ENCODE measurements at regions of chr4 and their contacts with region 1.

Region 1: DNA sequence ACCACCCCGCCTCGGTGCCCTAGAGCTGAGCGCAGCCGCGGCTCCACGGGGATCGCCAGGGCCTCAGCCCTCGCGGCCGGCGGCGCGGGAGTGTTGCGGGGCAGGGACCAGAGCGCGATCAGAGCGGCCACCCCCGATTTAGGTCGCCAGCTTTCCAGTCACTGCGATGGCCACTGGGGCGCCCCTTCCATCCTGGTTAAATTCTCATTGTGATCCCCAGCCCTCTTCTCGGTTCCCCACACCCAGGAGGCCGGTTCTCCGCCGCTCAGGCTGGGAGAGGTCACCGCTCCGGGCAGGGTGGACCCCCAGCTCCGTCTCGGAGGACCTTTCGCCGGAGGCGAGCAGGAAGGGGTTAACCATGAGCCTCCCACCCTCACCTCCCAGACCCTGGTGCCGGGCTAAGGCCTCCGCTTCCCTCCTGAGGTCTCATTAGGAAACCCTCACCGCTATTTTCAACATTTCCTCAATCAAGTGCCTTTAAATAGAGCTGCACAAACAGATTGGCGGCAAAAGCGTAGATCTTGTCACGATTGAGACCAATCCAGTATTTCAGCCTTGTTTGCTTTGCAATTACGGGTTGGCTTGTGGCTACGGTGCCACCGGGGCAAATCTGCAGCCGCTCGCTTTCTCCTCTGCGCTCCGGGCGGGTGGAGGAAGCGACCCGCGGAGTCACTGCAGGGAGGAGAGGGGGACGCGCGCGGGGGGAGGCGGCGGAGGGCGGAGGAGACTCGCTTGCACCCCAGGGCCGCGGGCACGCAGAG is 8.3 kb upstream of the HAND2 start:
- DNase-seq: peak; percentile 60 to 84 (median 70)
- ATAC-seq: peak; percentile 68 to 80 (median 76)
- H3K4me3 ChIP-seq: peak overlapping the region; percentile 25 to 85 (median 54)
- H3K27ac ChIP-seq: peak overlapping the region; percentile 72 to 99 (median 92)
- H3K4me1 ChIP-seq: peaks cover 0 to 40% (median 15%) of the 10 kb centered on the region in 12 donors
- H3K27me3 ChIP-seq: peaks cover 0 to 84% (median 3%) of the 10 kb centered on the region in 9 donors
- CTCF ChIP-seq: no peak
- POLR2A ChIP-seq: no peak

Region 2: DNA sequence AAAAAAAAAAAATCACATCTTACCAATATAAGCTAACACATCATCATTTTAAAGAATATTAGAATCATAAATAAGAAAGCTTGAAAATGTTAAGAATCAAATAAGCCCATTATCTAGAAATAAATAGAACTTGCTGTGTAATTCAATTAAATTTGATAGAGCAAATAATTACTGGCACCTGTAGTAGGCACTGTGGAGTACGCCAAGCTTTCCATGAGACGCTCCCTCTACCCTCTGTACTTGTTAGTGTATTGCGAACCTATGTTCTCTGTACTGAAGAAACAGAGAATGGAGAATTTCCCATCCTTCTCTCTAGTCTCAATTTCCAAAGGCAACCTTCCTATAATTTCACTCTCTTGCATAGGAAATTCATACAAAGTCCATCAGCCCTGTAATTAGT is 53.4 kb after region 1 on chr4:
- intact Hi-C with region 1: loop called in 1 of 10 experiments (anchors 1 kb)
- DNase-seq: no peak
- ATAC-seq: no peak
- H3K4me3 ChIP-seq: no peak overlapping the region
- H3K27ac ChIP-seq: peak overlapping the region in 1 of 12 donors; percentile 66
- H3K4me1 ChIP-seq: peaks cover 0 to 10% (median 0%) of the 10 kb centered on the region in 12 donors
- H3K27me3 ChIP-seq: no peaks in the 10 kb centered on the region
- CTCF ChIP-seq: no peak
- POLR2A ChIP-seq: no peak